ENCODE measurements at regions of chr9 and their contacts with region 1.

Region 1: GRCh38 chr9:35945341-35946018 is 12.5 kb downstream of the OR2S2 start:
- DNase-seq: peak; percentile 63
- H3K4me3 ChIP-seq: no peak overlapping the region
- H3K27ac ChIP-seq: peak overlapping the region; percentile 22
- H3K27me3 ChIP-seq: no peaks in the 10 kb centered on the region
- CTCF ChIP-seq: peak; percentile 96

Region 2: DNA sequence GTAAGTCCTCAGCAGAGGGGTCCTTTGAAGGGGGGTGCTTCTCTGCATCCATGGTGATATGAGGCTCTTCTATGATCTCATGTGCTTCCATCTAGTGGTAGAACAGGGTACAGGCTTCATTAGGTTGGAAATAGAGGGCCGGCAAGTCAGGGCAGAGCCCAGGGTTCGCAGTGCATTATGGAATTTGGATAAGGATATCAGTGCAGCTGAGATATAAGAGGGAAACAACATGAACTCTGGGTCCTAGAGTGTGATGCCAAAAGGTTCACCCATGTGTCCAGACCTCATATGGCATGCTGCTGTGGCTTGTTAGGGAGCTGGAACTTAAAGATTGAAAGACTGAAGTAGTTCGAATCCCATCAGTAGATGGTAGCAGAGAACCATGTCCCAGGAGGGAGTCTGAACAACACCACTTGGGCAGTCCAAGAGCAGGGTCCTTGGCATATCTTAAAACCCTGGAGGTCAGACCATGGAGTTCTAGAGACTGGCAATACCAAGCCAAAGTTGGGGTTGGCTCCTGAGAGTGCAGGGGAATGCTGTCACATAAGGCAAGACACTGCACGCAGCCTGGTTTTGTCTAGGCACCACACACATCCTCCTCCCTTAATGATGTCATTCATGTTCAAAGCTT is 119.3 kb before region 1 on chr9:
- CTCF ChIA-PET with region 1: interaction called, 25 read pairs
- POLR2A ChIA-PET with region 1: interaction called, 3 read pairs
- DNase-seq: no peak
- H3K4me3 ChIP-seq: no peak overlapping the region
- H3K27ac ChIP-seq: no peak overlapping the region
- H3K27me3 ChIP-seq: peaks cover 2% of the 10 kb centered on the region
- CTCF ChIP-seq: peak; percentile 85

Region 3: GRCh38 chr9:35923927-35924763 is 21.3 kb before region 1 on chr9:
- CTCF ChIA-PET with region 1: interaction called, 33 read pairs
- POLR2A ChIA-PET with region 1: interaction called, 11 read pairs
- DNase-seq: peak; percentile 76
- H3K4me3 ChIP-seq: peak overlapping the region; percentile 38
- H3K27ac ChIP-seq: peak overlapping the region; percentile 97
- H3K27me3 ChIP-seq: no peaks in the 10 kb centered on the region
- CTCF ChIP-seq: no peak

Region 4: DNA sequence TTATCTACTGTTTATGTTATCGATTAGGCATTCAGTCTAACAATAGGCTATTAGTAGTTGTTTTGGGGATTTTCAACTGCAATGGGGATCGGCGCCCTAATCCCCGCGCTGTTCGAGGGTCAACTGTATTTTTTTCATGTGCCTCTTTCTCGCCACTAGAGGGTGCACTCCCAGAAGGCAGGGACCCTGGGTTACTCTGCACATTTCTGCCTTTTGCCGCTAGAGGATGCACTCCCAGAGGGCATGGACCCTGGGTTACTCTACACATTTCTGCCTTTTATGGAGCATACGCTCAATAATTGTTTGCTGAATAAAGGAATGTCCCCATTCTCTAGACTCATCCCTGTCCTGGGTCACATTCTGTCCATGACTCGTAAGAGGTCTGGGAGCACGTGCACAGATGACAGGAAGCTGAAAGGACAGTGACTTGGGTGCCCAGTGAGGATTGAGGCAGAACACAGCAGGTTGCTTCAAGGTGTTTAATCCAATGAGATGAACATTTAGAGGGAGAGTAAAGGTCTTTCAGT is 63.4 kb after region 1 on chr9:
- CTCF ChIA-PET with region 1: interaction called, 10 read pairs
- POLR2A ChIA-PET with region 1: no interaction called
- DNase-seq: no peak
- H3K4me3 ChIP-seq: no peak overlapping the region
- H3K27ac ChIP-seq: no peak overlapping the region
- H3K27me3 ChIP-seq: no peaks in the 10 kb centered on the region
- CTCF ChIP-seq: peak; percentile 86

Region 5: DNA sequence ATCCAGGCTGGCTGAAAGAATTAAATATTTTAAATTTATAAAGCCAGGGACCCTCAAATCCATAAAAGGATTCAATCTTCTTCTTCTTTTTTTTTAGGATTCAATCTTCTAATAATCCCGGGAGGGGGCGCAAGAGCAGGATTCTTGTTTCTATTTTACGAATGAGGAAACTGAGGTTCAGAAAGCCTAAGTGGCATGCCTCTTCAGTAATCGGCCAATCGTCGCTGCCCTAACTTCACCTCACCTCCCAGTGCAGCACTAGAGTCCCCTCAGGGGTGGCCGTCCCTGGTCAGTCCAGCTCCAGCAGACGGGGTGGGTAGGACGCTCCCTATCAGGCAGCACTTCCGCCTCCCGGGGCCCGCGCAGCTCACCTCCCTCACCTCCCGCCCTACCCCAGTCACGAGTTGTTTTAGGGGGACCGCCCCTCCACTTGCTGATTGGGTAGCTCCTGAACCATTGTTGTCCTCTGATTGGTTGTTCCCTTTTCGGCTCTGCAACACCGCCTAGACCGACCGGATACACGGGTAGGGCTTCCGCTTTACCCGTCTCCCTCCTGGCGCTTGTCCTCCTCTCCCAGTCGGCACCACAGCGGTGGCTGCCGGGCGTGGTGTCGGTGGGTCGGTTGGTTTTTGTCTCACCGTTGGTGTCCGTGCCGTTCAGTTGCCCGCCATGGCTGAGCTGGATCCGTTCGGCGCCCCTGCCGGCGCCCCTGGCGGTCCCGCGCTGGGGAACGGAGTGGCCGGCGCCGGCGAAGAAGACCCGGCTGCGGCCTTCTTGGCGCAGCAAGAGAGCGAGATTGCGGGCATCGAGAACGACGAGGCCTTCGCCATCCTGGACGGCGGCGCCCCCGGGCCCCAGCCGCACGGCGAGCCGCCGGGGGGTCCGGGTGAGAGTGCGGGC is 245.2 kb after region 1 on chr9 and contains the start of gene CLTA:
- CTCF ChIA-PET with region 1: interaction called, 12 read pairs
- POLR2A ChIA-PET with region 1: no interaction called
- DNase-seq: peak; percentile 92
- H3K4me3 ChIP-seq: peak within 1 kb of the TSS; percentile 96
- H3K27ac ChIP-seq: peak within 1 kb of the TSS; percentile 89
- H3K27me3 ChIP-seq: no peaks in the 10 kb centered on the region
- CTCF ChIP-seq: peak; percentile 74
- polyA plus RNA-seq, gene CLTA: 314 and 364 TPM in 2 replicates

Region 6: DNA sequence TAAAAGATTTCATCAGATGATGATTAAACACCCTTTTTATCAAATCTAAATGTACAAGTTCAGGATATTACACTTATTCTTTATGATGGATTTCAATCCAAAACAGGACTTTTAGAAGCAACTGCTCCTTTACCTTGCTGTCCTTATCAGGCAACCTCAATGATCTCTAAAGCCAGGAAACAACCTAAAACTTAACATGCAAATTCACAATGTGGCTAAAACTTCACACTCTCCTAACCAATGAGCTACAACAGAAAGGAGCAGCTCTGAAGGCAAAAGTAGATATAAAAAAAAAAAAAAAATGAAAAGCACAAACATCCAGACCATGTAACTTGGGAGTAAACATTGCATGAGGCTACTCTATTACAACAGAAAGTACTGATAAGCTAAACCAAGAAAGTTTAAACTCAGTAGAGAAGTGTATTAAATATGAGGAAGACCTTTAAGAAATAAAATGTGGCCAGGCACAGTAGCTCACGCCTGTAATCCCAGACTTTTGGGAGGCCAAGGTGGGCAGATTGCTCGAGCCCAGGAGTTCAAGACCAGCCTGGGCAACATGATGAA is 1935.5 kb after region 1 on chr9:
- CTCF ChIA-PET with region 1: no interaction called
- POLR2A ChIA-PET with region 1: no interaction called
- DNase-seq: no peak
- H3K4me3 ChIP-seq: no peak overlapping the region
- H3K27ac ChIP-seq: no peak overlapping the region
- H3K27me3 ChIP-seq: no peaks in the 10 kb centered on the region
- CTCF ChIP-seq: no peak

Measured in AG04450 (cell line).